ENCODE measurements at regions of chr2 and their contacts with region 1.

Region 1: GRCh38 chr2:162177301-162177700 is 25.3 kb upstream of the GCG start:
- DNase-seq: no peak
- H3K4me3 Mint-ChIP-seq: no peak overlapping the region
- H3K27ac Mint-ChIP-seq: no peak overlapping the region
- H3K4me1 Mint-ChIP-seq: no peaks in the 10 kb centered on the region
- H3K27me3 Mint-ChIP-seq: peaks cover 32% of the 10 kb centered on the region

Region 2: DNA sequence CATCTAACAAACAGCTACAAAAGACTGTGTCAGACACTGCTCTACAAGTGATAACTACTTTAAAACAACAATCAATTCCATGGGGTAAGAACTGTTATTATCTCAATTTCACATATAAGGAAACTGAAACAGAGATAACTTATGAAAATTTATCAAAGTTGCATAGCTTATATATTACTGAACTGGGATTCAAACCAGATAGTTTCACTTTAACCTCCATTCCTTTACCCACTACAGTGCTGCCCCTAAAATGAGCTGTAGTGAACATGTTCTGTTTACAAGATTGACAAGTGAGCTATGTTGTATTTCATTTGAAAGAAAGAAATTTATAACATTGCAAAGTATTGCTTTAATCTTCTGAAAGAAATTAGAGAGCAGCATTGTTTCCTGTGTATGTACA is 11.1 kb before region 1 on chr2:
- intact Hi-C with region 1: loop called (anchors 1 kb)
- DNase-seq: no peak
- H3K4me3 Mint-ChIP-seq: no peak overlapping the region
- H3K27ac Mint-ChIP-seq: no peak overlapping the region
- H3K4me1 Mint-ChIP-seq: peaks cover 5% of the 10 kb centered on the region
- H3K27me3 Mint-ChIP-seq: peaks cover 34% of the 10 kb centered on the region

Region 3: DNA sequence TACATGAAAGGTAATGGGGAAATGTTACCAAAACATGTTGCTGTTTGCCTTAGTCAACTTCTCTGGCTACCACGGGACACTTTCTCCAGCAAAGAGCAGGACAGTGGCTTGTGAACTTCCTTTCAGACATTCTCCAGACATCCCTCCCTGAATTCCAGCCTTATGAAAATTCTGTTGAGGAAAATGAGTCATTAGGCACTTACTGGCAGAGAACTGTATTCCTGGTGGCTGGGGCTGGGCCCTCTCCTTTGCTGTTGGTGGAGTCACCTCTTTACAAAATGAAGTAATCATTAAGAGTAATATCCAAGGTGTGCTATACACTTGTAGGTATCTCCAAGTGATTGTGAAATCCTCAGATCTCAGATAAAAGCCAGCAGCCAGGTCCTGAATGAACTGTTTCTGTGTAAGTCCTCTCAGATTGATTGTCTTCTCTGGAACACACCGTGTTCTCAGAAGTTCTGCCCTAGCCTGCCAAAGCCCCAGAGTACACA is 67.3 kb after region 1 on chr2:
- intact Hi-C with region 1: no loop called
- DNase-seq: no peak
- H3K4me3 Mint-ChIP-seq: no peak overlapping the region
- H3K27ac Mint-ChIP-seq: no peak overlapping the region
- H3K4me1 Mint-ChIP-seq: no peaks in the 10 kb centered on the region
- H3K27me3 Mint-ChIP-seq: peaks cover 64% of the 10 kb centered on the region